SK-N-SH (cell line): ENCODE measurements at regions of chr11 and their contacts with region 1.

Region 1: GRCh38 chr11:128884703-128885338 is 6.3 kb upstream of the KCNJ5 start:
- DNase-seq: peak; percentile 77
- H3K4me3 ChIP-seq: peak overlapping the region in 1 of 2 experiments; percentile 20; a peak in 1 of 4 replicates
- H3K27ac ChIP-seq: no peak overlapping the region
- H3K4me1 ChIP-seq: no peaks in the 10 kb centered on the region; a peak in 1 of 4 replicates
- H3K27me3 ChIP-seq: peaks cover 11% of the 10 kb centered on the region; the same call in 1 of the 2 replicates
- CTCF ChIP-seq: peak; percentile 94
- EP300 ChIP-seq: no peak
- RAD21 ChIP-seq: peak; percentile 96

Region 2: GRCh38 chr11:128852327-128853023 is 32.3 kb before region 1 on chr11:
- CTCF ChIA-PET with region 1: interaction called, 11 read pairs
- POLR2A ChIA-PET with region 1: no interaction called
- DNase-seq: no peak
- H3K4me3 ChIP-seq: no peak overlapping the region
- H3K27ac ChIP-seq: no peak overlapping the region
- H3K4me1 ChIP-seq: no peaks in the 10 kb centered on the region
- H3K27me3 ChIP-seq: no peaks in the 10 kb centered on the region
- CTCF ChIP-seq: no peak
- EP300 ChIP-seq: no peak
- RAD21 ChIP-seq: no peak

Region 3: DNA sequence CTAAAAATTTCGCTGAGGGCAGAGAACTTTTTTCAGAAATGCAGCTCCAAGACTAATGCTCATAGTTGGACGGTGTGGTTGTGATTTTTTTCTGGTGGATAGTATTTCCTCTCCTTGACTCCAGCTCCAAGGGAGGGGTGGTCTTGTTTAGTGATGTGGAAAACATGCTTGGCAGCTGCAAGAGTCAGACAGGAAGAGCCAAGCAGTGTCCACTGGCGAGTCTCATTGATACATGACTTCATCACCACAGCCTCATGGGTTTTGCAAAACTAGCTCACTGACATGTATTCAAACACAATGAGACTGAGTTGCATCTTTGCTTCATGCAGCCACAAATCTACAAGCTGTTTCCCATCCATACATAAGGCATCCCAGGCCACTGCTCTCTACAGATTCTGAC is 10.4 kb before region 1 on chr11:
- CTCF ChIA-PET with region 1: interaction called, 17 read pairs
- POLR2A ChIA-PET with region 1: no interaction called
- DNase-seq: no peak
- H3K4me3 ChIP-seq: no peak overlapping the region
- H3K27ac ChIP-seq: no peak overlapping the region
- H3K4me1 ChIP-seq: peaks cover 0 to 6% of the 10 kb centered on the region in 2 experiments; a peak in 1 of 4 replicates
- H3K27me3 ChIP-seq: no peaks in the 10 kb centered on the region
- CTCF ChIP-seq: no peak
- EP300 ChIP-seq: no peak
- RAD21 ChIP-seq: no peak

Region 4: GRCh38 chr11:128919216-128919615 is 34.4 kb after region 1 on chr11:
- CTCF ChIA-PET with region 1: interaction called, 201 read pairs
- POLR2A ChIA-PET with region 1: no interaction called
- DNase-seq: no peak
- H3K4me3 ChIP-seq: no peak overlapping the region
- H3K27ac ChIP-seq: no peak overlapping the region
- H3K4me1 ChIP-seq: no peaks in the 10 kb centered on the region; a peak in 1 of 4 replicates
- H3K27me3 ChIP-seq: peaks cover 5% of the 10 kb centered on the region; the same call in 1 of the 2 replicates
- CTCF ChIP-seq: no peak
- EP300 ChIP-seq: no peak
- RAD21 ChIP-seq: no peak

Region 5: DNA sequence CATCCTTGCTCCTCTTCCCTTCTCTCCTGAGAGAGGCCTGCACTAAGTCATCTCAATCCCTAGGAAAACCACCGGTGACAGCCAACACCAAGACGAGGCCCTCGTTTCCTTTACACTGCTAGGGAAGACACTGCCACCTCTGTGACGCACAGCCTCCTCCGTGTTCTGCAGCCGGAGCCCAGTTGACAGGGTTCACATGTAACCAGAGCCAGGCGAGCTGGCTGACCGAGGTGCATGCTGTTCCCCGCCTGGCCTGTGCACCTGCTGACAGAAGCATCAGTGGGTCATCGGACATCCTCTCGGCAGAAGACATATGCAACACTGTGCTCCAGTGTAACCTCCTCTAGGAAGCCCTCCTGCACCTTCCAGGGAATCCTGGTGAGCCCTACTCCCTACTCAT is 172.1 kb after region 1 on chr11:
- CTCF ChIA-PET with region 1: interaction called, 12 read pairs
- POLR2A ChIA-PET with region 1: no interaction called
- DNase-seq: no peak
- H3K4me3 ChIP-seq: no peak overlapping the region
- H3K27ac ChIP-seq: no peak overlapping the region
- H3K4me1 ChIP-seq: peaks cover 0 to 2% of the 10 kb centered on the region in 2 experiments; a peak in 2 of 4 replicates
- H3K27me3 ChIP-seq: no peaks in the 10 kb centered on the region
- CTCF ChIP-seq: no peak
- EP300 ChIP-seq: no peak
- RAD21 ChIP-seq: no peak